Heart right ventricle (tissue), 16 donors: ENCODE measurements at regions of chr2 and their contacts with region 1.

Region 1: DNA sequence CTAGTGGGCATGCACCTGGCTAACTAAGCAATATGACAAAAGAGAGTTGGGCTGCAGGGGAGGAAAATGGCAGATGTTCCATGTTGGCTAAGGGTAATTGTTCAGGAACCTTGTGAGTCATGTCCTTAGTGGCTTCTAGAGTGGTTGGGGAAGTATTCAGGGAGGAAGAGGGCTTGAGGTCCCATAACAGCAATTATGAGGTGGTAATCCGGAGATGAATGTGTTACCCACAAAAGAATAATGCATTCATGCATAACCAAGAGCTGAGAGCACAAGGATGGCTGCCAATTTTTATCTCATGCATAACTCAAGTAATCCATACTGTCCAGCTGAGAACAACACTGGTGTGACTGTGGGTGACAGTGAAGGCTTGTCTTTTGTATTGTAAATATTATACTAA is 42.9 kb downstream of the TMEFF2 start:
- DNase-seq: no peak
- ATAC-seq: no peak
- H3K4me3 ChIP-seq: no peak overlapping the region
- H3K27ac ChIP-seq: no peak overlapping the region
- H3K4me1 ChIP-seq: peaks cover 0 to 18% (median 4%) of the 10 kb centered on the region in 9 donors
- H3K27me3 ChIP-seq: no peaks in the 10 kb centered on the region
- CTCF ChIP-seq: no peak

Region 2: DNA sequence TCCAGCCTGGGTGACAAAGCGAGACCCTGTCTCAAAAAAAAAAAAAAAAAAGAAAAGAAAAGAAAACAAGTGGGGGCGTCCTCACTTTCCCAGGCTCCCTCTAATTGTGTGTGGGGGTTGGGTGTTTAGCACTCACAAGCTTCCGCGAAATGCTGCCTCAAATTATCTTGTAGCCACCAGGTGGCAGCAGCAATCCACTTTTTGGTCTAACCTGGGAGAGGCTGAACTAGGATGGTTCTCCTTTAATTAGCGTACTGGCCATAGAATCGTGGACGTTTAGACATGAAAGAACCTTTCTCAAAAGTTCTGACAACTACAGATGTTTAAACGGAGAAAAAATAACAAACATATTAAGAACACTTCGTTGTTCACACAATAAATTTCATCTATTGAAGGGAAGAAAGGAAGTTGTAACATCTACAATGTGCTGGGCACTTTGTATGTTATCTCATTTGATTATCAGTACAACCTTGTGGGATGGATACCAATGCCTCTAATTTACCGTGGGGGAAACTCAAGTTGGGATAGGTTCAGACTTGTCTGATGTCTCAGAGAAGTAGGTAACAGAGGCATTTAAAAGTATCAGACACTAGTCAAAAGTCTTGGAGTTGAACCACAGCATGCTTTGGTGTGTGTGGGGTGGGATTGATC is 596.6 kb before region 1 on chr2:
- intact Hi-C with region 1: loop called in 1 of 10 experiments (anchors 10 kb)
- DNase-seq: peak; percentile 58 to 82
- ATAC-seq: peak; percentile 86 to 95 (median 90)
- H3K4me3 ChIP-seq: no peak overlapping the region
- H3K27ac ChIP-seq: no peak overlapping the region
- H3K4me1 ChIP-seq: no peaks in the 10 kb centered on the region
- H3K27me3 ChIP-seq: peaks cover 0 to 23% (median 5%) of the 10 kb centered on the region in 7 donors
- CTCF ChIP-seq: peak; percentile 50 to 84 (median 74)

Region 3: DNA sequence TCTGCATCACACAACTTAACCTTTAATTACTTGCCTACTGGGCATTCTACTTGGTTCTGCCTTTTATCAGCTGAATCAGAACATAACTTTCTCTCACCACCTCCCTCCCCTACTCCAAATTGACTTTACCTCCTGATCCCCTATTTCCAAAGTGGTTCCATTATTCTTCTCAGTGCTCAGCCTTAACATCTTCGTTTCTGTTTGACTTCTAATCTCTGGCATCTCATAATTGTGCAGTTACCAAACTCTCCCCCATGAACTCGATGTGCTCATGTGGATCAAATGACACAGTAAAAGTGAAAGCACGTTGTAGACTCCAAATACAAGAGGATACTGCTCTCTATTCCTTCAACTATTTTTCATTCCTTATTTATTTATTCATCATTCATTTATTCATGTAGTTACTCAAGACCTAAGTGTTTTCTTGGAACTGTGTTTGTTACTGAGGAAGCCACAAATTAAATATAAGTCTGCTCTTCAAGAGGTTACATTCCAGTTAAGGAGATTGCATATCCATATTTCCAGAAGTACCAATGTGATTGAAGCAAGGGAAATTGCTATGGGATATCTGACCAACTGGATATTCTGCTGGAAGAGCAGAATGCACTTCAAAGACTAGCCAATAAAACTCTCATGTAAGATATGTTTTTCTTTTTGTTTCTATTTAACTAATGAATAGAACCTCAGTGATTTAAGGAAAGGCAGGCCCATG is 116.0 kb before region 1 on chr2:
- intact Hi-C with region 1: loop called in 1 of 10 experiments (anchors 10 kb)
- DNase-seq: no peak
- ATAC-seq: no peak
- H3K4me3 ChIP-seq: no peak overlapping the region
- H3K27ac ChIP-seq: no peak overlapping the region
- H3K4me1 ChIP-seq: peaks cover 0 to 5% (median 0%) of the 10 kb centered on the region in 9 donors
- H3K27me3 ChIP-seq: no peaks in the 10 kb centered on the region
- CTCF ChIP-seq: no peak